Activated naive CD4-positive, alpha-beta T cell treated with anti-CD3 and anti-CD28 coated beads for 36 hours (primary cell): ENCODE measurements at regions of chr5 and their contacts with region 1.

Region 1: GRCh38 chr5:157761690-157762621 is 18.4 kb downstream of the LSM11 start:
- DNase-seq: peak; percentile 35
- H3K4me3 Mint-ChIP-seq: no peak overlapping the region
- H3K27ac Mint-ChIP-seq: no peak overlapping the region
- H3K4me1 Mint-ChIP-seq: peaks cover 7% of the 10 kb centered on the region
- H3K27me3 Mint-ChIP-seq: no peaks in the 10 kb centered on the region

Region 2: DNA sequence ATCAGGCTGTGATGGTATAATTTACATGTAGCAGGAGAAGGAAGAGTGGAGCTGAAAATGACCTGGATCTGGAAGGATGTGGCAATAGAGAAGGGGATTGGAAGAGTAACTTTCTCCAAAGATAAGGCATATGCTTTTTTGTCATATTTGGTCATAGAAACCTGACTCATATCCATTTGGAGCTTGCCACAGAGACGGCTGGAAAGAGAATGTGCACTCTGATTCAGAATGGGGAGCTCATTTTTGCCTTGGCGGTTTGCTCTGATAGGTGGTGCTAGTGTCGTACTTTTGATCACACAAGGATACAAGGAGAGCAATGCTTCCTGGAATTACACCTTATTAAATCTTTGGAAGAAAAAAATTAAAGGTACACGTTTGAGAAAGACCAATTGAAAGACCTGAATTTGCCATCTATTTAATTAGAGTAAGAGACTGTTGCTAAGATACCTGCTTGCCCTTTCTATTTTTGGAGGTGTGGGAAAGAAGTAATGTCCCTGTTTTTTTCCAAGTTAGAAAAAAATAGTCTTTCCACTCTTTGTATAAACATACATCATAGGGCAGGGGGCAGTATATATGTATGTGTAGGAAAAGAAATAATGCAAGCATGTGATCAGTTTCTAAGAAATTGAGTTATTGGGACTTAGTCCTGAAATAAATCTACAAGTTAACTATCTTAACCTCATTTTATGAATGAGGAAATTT is 13.0 kb before region 1 on chr5:
- CTCF ChIA-PET with region 1: interaction called, 26 read pairs
- intact Hi-C with region 1: no loop called
- DNase-seq: peak; percentile 14
- H3K4me3 Mint-ChIP-seq: no peak overlapping the region
- H3K27ac Mint-ChIP-seq: no peak overlapping the region
- H3K4me1 Mint-ChIP-seq: peaks cover 47% of the 10 kb centered on the region
- H3K27me3 Mint-ChIP-seq: no peaks in the 10 kb centered on the region

Region 3: DNA sequence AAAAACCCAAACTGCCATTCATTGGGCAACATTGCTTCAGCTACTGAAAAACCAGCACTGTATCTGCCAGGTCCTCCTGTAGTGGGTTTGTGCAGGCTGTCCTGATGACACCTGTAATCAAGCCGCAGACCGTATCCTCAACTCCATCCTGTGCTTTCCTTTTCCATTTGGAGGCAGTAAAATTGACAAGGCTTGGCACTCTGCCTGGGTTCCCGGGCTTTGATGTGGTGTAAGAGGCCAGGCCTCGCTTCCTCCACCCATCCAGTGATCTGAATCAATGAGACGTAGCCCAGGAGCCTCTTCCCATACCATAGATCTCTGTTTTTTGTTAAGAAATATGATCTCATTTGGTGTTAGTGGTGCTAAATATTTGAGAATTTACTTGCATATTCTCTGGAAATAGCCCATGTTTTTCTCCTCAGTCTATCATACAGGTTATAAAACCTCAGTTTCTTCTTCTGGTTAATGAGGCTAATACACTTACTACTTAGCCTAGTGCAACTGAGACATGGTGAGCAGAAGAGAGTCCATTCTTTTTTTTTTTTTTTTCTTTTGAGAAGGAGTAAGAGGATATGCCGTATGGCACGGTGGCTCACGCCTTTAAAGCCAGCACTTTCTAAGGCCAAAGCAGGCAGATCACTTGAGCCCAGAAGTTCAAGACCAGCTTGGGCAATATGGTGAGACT is 16.3 kb after region 1 on chr5:
- CTCF ChIA-PET with region 1: interaction called, 27 read pairs
- intact Hi-C with region 1: no loop called
- DNase-seq: no peak
- H3K4me3 Mint-ChIP-seq: no peak overlapping the region
- H3K27ac Mint-ChIP-seq: no peak overlapping the region
- H3K4me1 Mint-ChIP-seq: no peaks in the 10 kb centered on the region
- H3K27me3 Mint-ChIP-seq: no peaks in the 10 kb centered on the region

Region 4: DNA sequence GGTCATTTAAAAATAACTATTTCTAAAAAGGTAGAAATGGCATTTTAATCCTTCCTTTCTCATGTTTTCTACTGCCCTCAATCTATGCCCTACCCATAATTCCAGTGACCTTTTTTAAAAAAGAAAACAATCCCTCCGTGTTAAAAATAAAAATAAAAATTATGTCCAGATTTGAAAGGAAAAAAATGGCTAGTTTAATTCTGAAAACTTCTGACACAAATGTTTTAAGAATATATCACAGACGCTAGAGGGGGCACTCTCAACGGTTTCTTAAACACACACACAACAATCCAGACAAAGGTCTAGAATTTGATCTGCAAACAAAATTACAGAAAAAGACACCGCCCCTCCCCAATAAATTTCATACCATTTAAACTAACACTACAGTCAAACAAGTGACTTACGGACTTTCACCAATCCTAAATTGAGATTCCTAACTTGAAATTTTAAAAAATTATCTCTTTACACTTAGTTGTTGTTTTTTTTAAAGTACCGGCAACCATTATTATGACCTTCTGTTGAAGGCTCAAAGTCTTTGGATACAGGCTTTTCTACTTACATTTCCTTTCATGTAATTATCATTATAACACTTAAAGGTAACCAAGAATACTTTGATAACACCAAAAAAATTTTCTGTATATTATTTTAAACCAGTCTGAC is 58.8 kb after region 1 on chr5:
- CTCF ChIA-PET with region 1: interaction called, 3 read pairs
- intact Hi-C with region 1: loop called (anchors 1 kb)
- DNase-seq: peak; percentile 50
- H3K4me3 Mint-ChIP-seq: no peak overlapping the region
- H3K27ac Mint-ChIP-seq: no peak overlapping the region
- H3K4me1 Mint-ChIP-seq: peaks cover 30% of the 10 kb centered on the region
- H3K27me3 Mint-ChIP-seq: no peaks in the 10 kb centered on the region

Region 5: DNA sequence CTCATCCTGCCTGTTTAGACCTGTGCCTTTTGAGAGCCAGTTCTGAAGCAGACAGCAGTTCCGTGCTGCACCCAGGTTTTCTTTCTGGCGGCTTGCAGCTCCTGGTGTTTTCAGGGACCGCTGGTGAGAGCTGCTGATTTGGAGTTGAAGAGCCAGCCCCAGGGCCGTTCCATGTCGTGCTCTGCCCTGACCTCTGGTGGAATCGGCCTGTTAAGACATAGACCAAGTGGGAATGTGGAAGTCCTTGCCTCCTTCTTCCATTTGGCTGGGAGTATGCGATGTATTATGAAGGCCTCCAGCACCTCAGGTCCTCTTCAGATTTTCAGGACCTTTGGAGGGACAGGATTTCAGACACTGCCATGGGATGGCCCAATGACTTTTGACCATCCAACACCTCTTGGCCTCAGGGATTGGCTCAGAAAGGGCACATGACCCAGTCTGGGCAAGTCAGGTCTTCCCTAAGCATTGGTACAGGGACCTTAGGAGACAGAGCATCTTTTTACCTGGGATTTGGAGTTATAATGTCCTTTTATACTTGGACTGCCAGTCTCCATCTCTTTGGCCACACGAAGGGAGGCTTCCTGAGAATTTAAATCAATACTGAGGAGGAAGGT is 233.1 kb after region 1 on chr5:
- CTCF ChIA-PET with region 1: interaction called, 18 read pairs
- intact Hi-C with region 1: loop called (anchors 1 kb)
- DNase-seq: peak; percentile 64
- H3K4me3 Mint-ChIP-seq: no peak overlapping the region
- H3K27ac Mint-ChIP-seq: no peak overlapping the region
- H3K4me1 Mint-ChIP-seq: peaks cover 11% of the 10 kb centered on the region
- H3K27me3 Mint-ChIP-seq: peaks cover 22% of the 10 kb centered on the region